ENCODE measurements at regions of chr14 and their contacts with region 1.

Region 1: GRCh38 chr14:88919502-88919901 is 95.1 kb downstream of the TTC8 start:
- DNase-seq: peak; percentile 15
- H3K4me3 Mint-ChIP-seq: no peak overlapping the region
- H3K27ac Mint-ChIP-seq: no peak overlapping the region
- H3K4me1 Mint-ChIP-seq: no peaks in the 10 kb centered on the region
- H3K27me3 Mint-ChIP-seq: no peaks in the 10 kb centered on the region
- CTCF ChIP-seq: no peak

Region 2: DNA sequence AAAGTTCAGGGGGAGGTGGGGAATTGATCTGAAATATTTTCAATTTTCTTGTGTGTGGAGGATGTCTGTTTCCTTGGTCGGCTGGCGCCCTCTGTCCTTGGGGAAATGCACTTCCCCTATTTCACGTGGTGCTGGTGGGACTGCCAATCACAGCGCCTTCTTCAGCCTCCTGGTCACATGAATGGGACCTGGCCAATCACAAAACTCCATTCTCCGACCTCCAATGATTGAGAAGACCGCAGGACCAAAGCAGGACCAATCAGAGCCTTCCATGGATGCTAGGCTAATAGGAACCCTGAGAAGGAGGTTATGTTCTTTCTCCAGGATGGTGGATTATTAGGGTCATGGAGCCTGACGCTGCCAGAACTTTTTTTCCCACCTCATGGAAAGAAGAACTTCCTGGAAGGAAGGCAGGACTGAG is 93.6 kb after region 1 on chr14:
- CTCF ChIA-PET with region 1: no interaction called
- intact Hi-C with region 1: loop called (anchors 5 kb)
- DNase-seq: peak; percentile 69
- H3K4me3 Mint-ChIP-seq: peak overlapping the region; percentile 84
- H3K27ac Mint-ChIP-seq: peak overlapping the region; percentile 27
- H3K4me1 Mint-ChIP-seq: peaks cover 10% of the 10 kb centered on the region
- H3K27me3 Mint-ChIP-seq: peaks cover 21% of the 10 kb centered on the region
- CTCF ChIP-seq: no peak

Measured in Calu3 (cell line).